ENCODE measurements at regions of chr5 and their contacts with region 1.

Region 1: GRCh38 chr5:138035605-138036537 is 3.0 kb upstream of the FAM13B start:
- DNase-seq: peak; percentile 82
- H3K27ac ChIP-seq: no peak overlapping the region
- CTCF ChIP-seq: peak; percentile 94

Region 2: DNA sequence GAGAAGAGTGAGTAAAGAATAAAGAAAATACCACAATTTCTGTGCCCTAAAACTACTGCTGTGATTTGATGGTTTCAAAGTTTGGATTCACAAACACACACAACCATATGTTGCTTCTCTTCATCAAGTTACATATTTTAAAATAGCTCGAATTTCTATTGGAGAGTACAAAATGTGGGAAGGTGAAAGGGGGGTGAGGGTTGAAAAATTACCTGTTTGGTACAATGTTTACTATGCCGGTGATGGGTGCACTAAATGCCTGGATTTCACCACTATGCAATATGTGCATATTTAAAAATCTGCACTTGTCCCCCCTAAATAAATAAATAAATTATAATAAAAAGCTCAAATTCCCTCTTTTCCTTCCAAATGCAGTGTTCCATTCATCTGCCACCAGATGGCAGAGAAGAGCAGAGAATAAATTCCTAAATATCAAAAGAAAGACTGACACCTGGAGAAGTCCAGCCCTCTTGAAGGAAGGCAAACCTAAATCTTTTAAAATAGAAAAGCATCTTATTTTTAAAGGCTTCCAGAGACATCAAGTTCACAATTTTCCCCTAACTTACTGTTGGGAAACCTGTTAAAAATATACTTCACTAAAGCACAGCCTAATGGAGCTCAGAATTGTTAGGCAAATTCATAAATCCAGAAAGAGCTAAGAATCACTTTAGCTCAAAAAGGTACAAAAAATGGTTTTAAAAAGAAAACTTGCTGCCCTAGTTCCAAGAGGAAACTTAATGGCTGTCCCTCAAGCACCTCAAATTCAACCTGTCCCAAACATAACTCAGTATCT is 256.9 kb before region 1 on chr5:
- CTCF ChIA-PET with region 1: interaction called, 10 read pairs
- POLR2A ChIA-PET with region 1: no interaction called
- DNase-seq: peak; percentile 45
- H3K27ac ChIP-seq: no peak overlapping the region
- CTCF ChIP-seq: peak; percentile 88

Region 3: GRCh38 chr5:138051441-138052296 is 15.8 kb after region 1 on chr5:
- CTCF ChIA-PET with region 1: interaction called, 12 read pairs
- POLR2A ChIA-PET with region 1: no interaction called
- DNase-seq: no peak
- H3K27ac ChIP-seq: no peak overlapping the region
- CTCF ChIP-seq: no peak

Region 4: GRCh38 chr5:138065102-138065501 is 29.2 kb after region 1 on chr5:
- CTCF ChIA-PET with region 1: interaction called, 60 read pairs
- POLR2A ChIA-PET with region 1: no interaction called
- DNase-seq: no peak
- H3K27ac ChIP-seq: no peak overlapping the region
- CTCF ChIP-seq: no peak

Region 5: DNA sequence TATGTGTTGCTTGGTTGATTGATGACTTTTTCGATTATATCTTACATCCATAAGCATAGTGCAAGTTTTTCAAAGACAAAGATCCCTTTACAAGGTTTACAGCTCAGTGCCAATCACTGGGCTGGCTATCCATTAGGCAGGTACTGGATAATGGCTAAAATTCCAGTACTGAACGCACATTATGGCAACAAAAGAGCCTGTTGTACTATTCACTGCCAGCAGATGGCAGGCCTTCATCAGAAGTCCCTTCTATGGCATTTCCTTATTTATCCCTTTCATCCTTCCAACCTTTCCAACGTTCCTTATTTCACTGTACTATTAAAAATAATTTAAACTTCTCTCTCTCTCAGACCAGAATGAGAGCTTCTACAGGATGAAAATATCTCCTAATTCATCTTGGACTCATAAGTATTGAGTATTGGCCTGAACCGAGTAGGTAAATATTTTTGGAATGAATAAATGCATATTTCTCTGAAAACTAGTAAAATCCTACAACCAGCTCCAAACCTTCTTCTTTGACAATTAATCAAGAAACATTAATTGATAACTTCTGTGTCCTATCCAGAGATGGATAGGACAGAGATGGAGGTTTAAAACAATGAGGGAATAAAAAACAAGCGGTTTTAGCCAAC is 41.3 kb after region 1 on chr5:
- CTCF ChIA-PET with region 1: interaction called, 10 read pairs
- POLR2A ChIA-PET with region 1: no interaction called
- DNase-seq: peak; percentile 84
- H3K27ac ChIP-seq: no peak overlapping the region
- CTCF ChIP-seq: peak; percentile 94

Region 6: DNA sequence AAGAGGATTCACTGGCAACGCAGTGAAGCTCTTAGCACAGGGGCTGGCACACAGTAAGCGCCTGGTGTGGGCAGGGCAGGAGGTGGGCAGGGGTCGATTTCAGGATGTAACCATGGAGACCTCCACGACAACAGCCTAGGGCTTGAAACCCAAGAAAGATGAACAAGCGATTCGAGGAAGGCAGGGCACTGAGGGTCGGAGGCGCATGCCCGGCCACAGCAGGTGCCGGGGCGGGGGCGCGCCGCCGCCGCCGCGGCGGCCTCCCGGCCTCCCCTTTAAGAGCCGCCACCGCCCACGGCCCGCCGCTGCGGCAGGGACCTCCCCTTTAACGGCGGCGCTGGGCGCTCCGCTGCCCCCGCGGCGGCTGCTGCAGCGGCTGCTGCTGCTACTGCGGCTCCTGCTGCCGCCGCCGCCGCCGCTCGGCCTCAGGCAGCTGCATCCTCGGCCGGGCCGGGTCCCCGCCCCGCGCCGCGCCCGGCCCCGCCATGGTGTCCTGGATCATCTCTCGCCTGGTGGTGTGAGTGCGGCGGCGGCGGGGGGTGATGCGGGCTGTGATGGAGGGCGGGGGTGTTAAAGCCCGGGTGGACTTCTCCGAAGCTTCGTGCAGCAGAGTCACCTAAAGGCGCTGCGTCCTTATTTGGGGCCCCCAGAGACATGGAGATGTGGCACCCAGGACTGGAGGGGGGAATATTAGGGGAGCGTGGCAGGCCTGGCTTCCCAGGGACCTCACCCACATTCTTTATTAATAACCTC is 403.0 kb after region 1 on chr5 and contains the start of gene REEP2:
- CTCF ChIA-PET with region 1: no interaction called
- POLR2A ChIA-PET with region 1: no interaction called
- DNase-seq: peak; percentile 56
- H3K27ac ChIP-seq: peak within 1 kb of the TSS; percentile 38
- CTCF ChIP-seq: no peak

Measured in RWPE1 (cell line).